Transverse colon (tissue), 4 donors: ENCODE measurements at regions of chr12 and their contacts with region 1.

Region 1: GRCh38 chr12:130154276-130155070 is 7.8 kb upstream of the FZD10 start:
- DNase-seq: no peak
- H3K4me3 ChIP-seq: no peak overlapping the region
- H3K27ac ChIP-seq: no peak overlapping the region
- H3K4me1 ChIP-seq: no peaks in the 10 kb centered on the region
- H3K27me3 ChIP-seq: peaks cover 24% of the 10 kb centered on the region
- CTCF ChIP-seq: no peak
- EP300 ChIP-seq: no peak
- POLR2A ChIP-seq: no peak

Region 2: DNA sequence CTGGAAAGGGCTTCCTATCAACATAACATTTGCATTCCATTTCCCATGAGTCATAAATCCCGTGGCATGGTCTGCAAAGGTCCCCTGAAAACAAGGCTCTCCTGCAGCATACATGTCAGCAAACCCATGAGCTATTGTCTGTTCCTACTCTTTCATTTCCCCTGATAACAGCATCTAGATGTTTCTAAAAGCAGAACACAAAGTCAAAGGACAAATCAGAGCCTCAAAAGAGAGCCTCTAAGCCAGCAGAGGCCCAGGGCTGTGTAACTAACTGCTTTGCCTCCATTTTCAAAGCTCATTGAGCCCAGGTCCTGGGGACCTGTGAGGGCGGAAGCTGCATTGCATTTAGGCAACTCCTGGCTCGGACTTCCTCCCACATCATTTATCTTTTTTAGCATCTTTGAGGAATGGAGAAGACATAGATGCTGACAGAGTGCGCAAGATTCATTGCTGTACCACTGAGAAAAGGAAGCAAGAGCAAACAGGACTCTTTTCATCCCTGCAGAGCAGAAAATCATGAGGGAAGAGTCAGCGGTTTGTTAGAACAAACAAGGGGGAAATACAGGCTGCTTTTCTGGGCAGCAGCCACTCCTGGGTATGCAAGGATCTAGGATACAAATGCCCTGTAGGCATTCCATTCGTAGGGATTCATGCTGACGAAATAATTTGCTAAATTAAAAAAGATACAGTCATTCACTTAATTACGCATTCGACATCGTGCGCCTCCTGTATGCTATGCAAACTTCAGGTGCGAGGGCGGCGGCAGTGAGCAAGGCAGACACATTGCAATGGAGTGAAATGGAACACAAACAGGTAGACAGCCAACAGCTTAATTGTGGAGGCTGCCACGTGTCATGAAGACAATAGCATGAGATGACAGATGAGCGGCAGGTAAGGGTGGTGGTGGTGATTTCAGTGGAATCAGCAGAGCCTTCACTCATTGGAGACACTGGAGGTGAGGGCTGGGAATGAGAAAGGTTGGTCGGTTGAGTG is 381.7 kb before region 1 on chr12:
- in situ Hi-C with region 1: no loop called
- intact Hi-C with region 1: no loop called
- DNase-seq: no peak
- H3K4me3 ChIP-seq: no peak overlapping the region
- H3K27ac ChIP-seq: no peak overlapping the region
- H3K4me1 ChIP-seq: no peaks in the 10 kb centered on the region
- H3K27me3 ChIP-seq: no peaks in the 10 kb centered on the region
- CTCF ChIP-seq: no peak
- EP300 ChIP-seq: no peak
- POLR2A ChIP-seq: no peak

Region 3: GRCh38 chr12:130185455-130186391 is 31.2 kb after region 1 on chr12:
- in situ Hi-C with region 1: no loop called
- intact Hi-C with region 1: loop called (anchors 1 kb)
- DNase-seq: no peak
- H3K4me3 ChIP-seq: no peak overlapping the region
- H3K27ac ChIP-seq: no peak overlapping the region
- H3K4me1 ChIP-seq: no peaks in the 10 kb centered on the region
- H3K27me3 ChIP-seq: no peaks in the 10 kb centered on the region
- CTCF ChIP-seq: no peak
- EP300 ChIP-seq: no peak
- POLR2A ChIP-seq: no peak

Region 4: GRCh38 chr12:130266751-130267150 is 112.3 kb after region 1 on chr12:
- in situ Hi-C with region 1: no loop called
- intact Hi-C with region 1: no loop called
- DNase-seq: no peak
- H3K4me3 ChIP-seq: no peak overlapping the region
- H3K27ac ChIP-seq: no peak overlapping the region
- H3K4me1 ChIP-seq: no peaks in the 10 kb centered on the region
- H3K27me3 ChIP-seq: no peaks in the 10 kb centered on the region
- CTCF ChIP-seq: no peak
- EP300 ChIP-seq: no peak
- POLR2A ChIP-seq: no peak

Region 5: GRCh38 chr12:131092901-131093603 is 938.6 kb after region 1 on chr12:
- in situ Hi-C with region 1: no loop called
- intact Hi-C with region 1: no loop called
- DNase-seq: peak; percentile 65
- H3K4me3 ChIP-seq: no peak overlapping the region
- H3K27ac ChIP-seq: peak overlapping the region in 1 of 4 donors; percentile 8
- H3K4me1 ChIP-seq: no peaks in the 10 kb centered on the region
- H3K27me3 ChIP-seq: no peaks in the 10 kb centered on the region
- CTCF ChIP-seq: no peak
- EP300 ChIP-seq: no peak
- POLR2A ChIP-seq: no peak